ENCODE measurements at regions of chr16 and their contacts with region 1.

Region 1: GRCh38 chr16:75319513-75320411 is 68.3 kb upstream of the BCAR1 start:
- DNase-seq: peak in 3 of 14 experiments; percentile 13 to 55 (median 21)
- ATAC-seq: peak; percentile 11
- H3K4me3 ChIP-seq: peak overlapping the region; percentile 24
- H3K4me3 Mint-ChIP-seq: peak overlapping the region; percentile 66
- H3K27ac ChIP-seq: no peak overlapping the region
- H3K27ac Mint-ChIP-seq: no peak overlapping the region
- H3K4me1 ChIP-seq: peaks cover 22% of the 10 kb centered on the region
- H3K4me1 Mint-ChIP-seq: peaks cover 32% of the 10 kb centered on the region
- H3K27me3 ChIP-seq: no peaks in the 10 kb centered on the region
- H3K27me3 Mint-ChIP-seq: no peaks in the 10 kb centered on the region
- CTCF ChIP-seq: no peak

Region 2: GRCh38 chr16:74837056-74837455 is 482.7 kb before region 1 on chr16:
- CTCF ChIA-PET with region 1: no interaction called
- POLR2A ChIA-PET with region 1: no interaction called
- intact Hi-C with region 1: no loop called
- DNase-seq: no peak
- ATAC-seq: no peak
- H3K4me3 ChIP-seq: no peak overlapping the region
- H3K4me3 Mint-ChIP-seq: no peak overlapping the region
- H3K27ac ChIP-seq: no peak overlapping the region
- H3K27ac Mint-ChIP-seq: no peak overlapping the region
- H3K4me1 ChIP-seq: no peaks in the 10 kb centered on the region
- H3K4me1 Mint-ChIP-seq: no peaks in the 10 kb centered on the region
- H3K27me3 ChIP-seq: no peaks in the 10 kb centered on the region
- H3K27me3 Mint-ChIP-seq: no peaks in the 10 kb centered on the region
- CTCF ChIP-seq: no peak

Region 3: DNA sequence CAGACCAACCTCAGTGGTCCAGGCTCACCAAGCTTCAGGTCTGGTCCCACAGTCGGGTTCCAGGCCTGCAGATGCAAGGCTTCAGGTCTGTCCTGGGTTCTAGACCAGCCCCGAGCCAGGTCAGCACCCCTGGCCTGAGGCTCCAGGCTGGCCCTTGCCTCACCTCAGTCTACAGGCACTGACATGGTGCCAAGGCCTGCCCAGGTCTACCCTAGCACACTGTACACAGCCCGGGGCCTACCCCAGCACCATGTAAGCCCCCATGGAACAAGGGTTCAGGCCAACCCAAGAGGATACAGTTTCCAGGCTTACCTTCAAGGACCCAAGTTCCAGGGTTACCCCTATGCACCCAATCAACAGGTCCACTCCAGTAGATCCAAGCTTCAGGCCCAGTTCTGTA is 144.7 kb before region 1 on chr16:
- CTCF ChIA-PET with region 1: no interaction called
- POLR2A ChIA-PET with region 1: no interaction called
- intact Hi-C with region 1: no loop called
- DNase-seq: no peak
- ATAC-seq: no peak
- H3K4me3 ChIP-seq: no peak overlapping the region
- H3K4me3 Mint-ChIP-seq: no peak overlapping the region
- H3K27ac ChIP-seq: no peak overlapping the region
- H3K27ac Mint-ChIP-seq: no peak overlapping the region
- H3K4me1 ChIP-seq: no peaks in the 10 kb centered on the region
- H3K4me1 Mint-ChIP-seq: no peaks in the 10 kb centered on the region
- H3K27me3 ChIP-seq: no peaks in the 10 kb centered on the region
- H3K27me3 Mint-ChIP-seq: no peaks in the 10 kb centered on the region
- CTCF ChIP-seq: no peak

Region 4: DNA sequence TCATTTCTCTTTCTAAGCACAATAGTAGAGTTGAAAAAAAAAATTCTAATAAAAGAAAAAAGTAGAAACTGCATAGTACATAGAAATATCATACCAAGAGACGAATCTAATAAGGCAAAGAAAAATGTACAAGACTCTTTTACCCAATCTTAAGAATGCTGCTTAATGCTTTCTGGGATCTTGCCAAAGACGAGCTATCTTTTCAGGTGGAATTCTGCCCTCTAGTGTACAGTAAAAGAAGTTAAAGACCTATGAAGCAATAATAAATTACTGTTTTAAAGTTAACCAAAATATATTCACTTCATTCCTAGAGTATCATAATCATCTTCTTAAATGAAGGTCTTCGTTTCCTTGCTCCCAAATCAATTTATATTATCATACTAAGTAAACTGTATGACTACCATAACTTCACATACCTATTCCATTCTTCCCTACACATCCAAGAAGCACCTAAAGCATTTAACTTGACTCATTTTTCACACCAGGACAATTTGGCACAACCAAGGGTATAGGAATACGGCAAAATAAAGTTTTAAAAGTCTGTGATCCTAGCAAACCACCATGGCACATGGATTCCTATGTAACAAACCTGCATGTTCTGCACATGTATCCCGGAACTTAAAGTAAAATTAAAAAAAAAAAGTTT is 65.9 kb after region 1 on chr16:
- CTCF ChIA-PET with region 1: no interaction called
- POLR2A ChIA-PET with region 1: no interaction called
- intact Hi-C with region 1: loop called in 1 of 2 experiments (anchors 10 kb)
- DNase-seq: peak in 3 of 14 experiments; percentile 68 to 82 (median 81)
- ATAC-seq: peak; percentile 60
- H3K4me3 ChIP-seq: no peak overlapping the region
- H3K4me3 Mint-ChIP-seq: no peak overlapping the region
- H3K27ac ChIP-seq: no peak overlapping the region
- H3K27ac Mint-ChIP-seq: no peak overlapping the region
- H3K4me1 ChIP-seq: peaks cover 14% of the 10 kb centered on the region
- H3K4me1 Mint-ChIP-seq: peaks cover 33% of the 10 kb centered on the region
- H3K27me3 ChIP-seq: no peaks in the 10 kb centered on the region
- H3K27me3 Mint-ChIP-seq: no peaks in the 10 kb centered on the region
- CTCF ChIP-seq: peak; percentile 86